ENCODE measurements at regions of chr1 and their contacts with region 1.

Region 1: DNA sequence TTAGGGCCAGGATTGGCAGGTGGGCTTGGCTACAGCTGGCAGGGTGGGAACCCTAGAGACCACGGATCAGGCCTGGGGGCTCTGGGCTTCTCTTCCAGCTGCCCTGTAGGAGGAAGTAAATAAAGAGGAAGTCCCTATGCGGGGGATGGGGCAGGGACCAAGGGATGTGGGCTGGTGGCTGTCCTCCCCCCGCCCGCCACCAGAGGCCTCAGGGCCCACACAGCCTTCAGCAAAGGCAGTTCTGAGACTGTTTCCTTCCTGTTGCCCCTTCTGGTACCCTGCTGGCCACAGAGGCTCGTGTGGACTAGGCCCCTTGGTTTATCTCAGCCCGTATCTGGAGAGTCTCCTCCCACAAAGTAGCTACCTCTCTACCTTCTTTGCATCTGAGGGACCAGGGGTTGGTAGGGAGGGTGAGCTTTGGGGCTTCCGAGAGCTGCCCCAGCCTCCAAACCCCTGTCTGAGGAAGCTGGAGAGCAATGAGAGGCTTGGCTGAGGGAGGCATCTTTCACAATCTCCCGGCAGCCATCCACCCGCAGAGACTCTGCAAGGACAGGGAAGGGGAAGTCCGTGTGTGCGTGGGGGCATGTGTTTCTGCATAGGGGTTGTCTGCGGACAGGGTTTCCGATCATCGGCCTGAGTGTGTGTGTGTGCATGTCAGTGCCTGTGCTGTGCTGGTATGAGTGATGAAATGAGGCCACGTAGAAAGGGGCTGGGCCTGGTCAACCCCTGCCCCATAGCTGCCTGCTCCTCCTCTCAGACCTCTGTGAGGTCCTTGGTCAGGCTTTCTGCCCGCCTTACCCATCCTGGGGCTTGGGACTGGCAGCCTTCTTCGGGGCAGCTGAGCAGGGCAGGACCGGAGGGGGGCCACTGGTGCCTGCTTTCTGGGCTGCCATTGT is 12.5 kb downstream of the RPS6KA1 start:
- DNase-seq: peak in 1 of 2 experiments; percentile 78
- H3K4me3 ChIP-seq: no peak overlapping the region; a peak in 1 of 8 replicates
- H3K27ac ChIP-seq: peak overlapping the region; percentile 45; the same call in 1 of the 2 replicates
- H3K4me1 ChIP-seq: peaks cover 0 to 17% (median 7%) of the 10 kb centered on the region in 4 experiments; a peak in 6 of 7 replicates
- H3K27me3 ChIP-seq: no peaks in the 10 kb centered on the region
- CTCF ChIP-seq: peak; percentile 59 to 74 (median 66)
- EP300 ChIP-seq: no peak
- POLR2A ChIP-seq: no peak
- RAD21 ChIP-seq: peak; percentile 34 to 41; a peak in 3 of 4 replicates

Region 2: GRCh38 chr1:26529655-26530409 is 12.2 kb before region 1 on chr1 and contains the start of gene RPS6KA1:
- CTCF ChIA-PET with region 1: interaction called, 88 read pairs
- POLR2A ChIA-PET with region 1: interaction called, 14 read pairs
- DNase-seq: peak in 1 of 2 experiments; percentile 88
- H3K4me3 ChIP-seq: peak within 1 kb of the TSS; percentile 51 to 97 (median 94)
- H3K27ac ChIP-seq: peak within 1 kb of the TSS; percentile 42; the same call in 1 of the 2 replicates
- H3K4me1 ChIP-seq: peaks cover 11 to 20% (median 19%) of the 10 kb centered on the region in 4 experiments
- H3K27me3 ChIP-seq: no peaks in the 10 kb centered on the region
- CTCF ChIP-seq: no peak
- EP300 ChIP-seq: no peak
- POLR2A ChIP-seq: peak; percentile 67 to 69; a peak in 2 of 3 replicates
- RAD21 ChIP-seq: no peak
- total RNA-seq, gene RPS6KA1: 55.0 and 56.5 TPM in 2 replicates

Region 3: GRCh38 chr1:26555550-26556510 is 13.8 kb after region 1 on chr1:
- CTCF ChIA-PET with region 1: interaction called, 81 read pairs
- POLR2A ChIA-PET with region 1: interaction called, 3 read pairs
- DNase-seq: no peak
- H3K4me3 ChIP-seq: no peak overlapping the region
- H3K27ac ChIP-seq: no peak overlapping the region
- H3K4me1 ChIP-seq: no peaks in the 10 kb centered on the region
- H3K27me3 ChIP-seq: no peaks in the 10 kb centered on the region; a peak in 1 of 7 replicates
- CTCF ChIP-seq: no peak
- EP300 ChIP-seq: no peak
- POLR2A ChIP-seq: no peak
- RAD21 ChIP-seq: no peak

Region 4: DNA sequence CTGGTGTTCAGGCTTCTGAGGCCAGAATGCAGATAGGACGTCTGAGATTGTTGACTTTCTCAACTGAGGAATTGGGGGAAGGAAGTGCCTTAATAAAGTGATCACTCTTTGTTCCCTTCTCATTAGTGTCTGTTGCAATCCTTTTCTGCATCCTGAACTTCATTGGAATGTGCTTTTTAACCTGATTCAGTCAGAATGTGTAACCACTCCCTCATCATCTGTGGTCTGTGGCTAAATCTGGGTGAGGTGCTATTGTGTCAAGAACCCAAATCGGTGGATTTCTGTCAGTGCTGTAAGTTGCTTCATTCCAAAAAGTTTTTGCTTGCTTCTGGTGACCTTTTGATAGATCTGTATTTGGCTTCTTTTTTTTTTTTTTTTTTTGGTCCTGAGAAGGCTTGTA is 191.9 kb after region 1 on chr1:
- CTCF ChIA-PET with region 1: no interaction called
- POLR2A ChIA-PET with region 1: no interaction called
- DNase-seq: no peak
- H3K4me3 ChIP-seq: no peak overlapping the region
- H3K27ac ChIP-seq: no peak overlapping the region
- H3K4me1 ChIP-seq: no peaks in the 10 kb centered on the region
- H3K27me3 ChIP-seq: no peaks in the 10 kb centered on the region
- CTCF ChIP-seq: no peak
- EP300 ChIP-seq: no peak
- POLR2A ChIP-seq: no peak
- RAD21 ChIP-seq: no peak